ENCODE measurements at regions of chr16 and their contacts with region 1.

Region 1: DNA sequence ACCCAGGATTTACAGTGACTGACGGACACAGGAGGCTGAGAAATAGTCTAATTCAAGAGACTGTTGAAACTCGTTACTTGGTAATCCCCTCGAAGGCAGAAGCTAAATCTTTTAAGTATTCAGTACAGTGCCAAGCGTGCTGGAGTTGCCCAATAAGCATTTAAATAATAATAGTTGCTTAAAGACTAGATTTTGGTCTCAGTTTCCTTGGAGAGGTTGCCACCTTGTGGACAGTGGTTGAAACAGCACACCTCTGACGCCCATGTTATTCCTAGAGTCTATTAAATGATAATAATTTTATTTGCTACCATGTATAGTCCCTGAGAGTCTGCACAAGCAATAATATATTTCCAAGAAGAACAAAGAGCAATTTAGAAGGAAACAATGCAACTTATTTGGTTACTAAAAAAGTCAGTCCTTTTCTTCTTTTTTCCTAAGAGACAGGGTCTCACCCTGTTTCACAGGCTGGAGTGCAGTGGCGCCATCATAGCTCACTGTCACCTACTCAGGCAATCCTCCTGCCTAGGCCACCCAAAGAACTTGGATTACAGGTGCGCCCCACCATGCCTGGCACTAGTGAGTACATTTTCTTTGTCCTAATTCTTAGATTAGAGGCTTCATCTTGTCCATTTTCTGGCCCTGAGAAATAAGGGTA is 138.0 kb upstream of the NUDT7 start:
- DNase-seq: peak in 1 of 3 donors; percentile 56
- ATAC-seq: peak; percentile 60
- H3K4me3 ChIP-seq: no peak overlapping the region
- H3K4me1 ChIP-seq: no peaks in the 10 kb centered on the region
- CTCF ChIP-seq: peak; percentile 60

Region 2: GRCh38 chr16:77236063-77236511 is 348.2 kb before region 1 on chr16:
- intact Hi-C with region 1: loop called (anchors 1 to 5 kb)
- DNase-seq: peak; percentile 80 to 92 (median 91)
- ATAC-seq: peak; percentile 100
- H3K4me3 ChIP-seq: no peak overlapping the region
- H3K4me1 ChIP-seq: no peaks in the 10 kb centered on the region
- CTCF ChIP-seq: peak; percentile 95

Region 3: GRCh38 chr16:77816293-77816692 is 232.0 kb after region 1 on chr16:
- intact Hi-C with region 1: no loop called
- DNase-seq: no peak
- ATAC-seq: no peak
- H3K4me3 ChIP-seq: no peak overlapping the region
- H3K4me1 ChIP-seq: no peaks in the 10 kb centered on the region
- CTCF ChIP-seq: no peak